HepG2 (cell line): ENCODE measurements at regions of chr13 and their contacts with region 1.

Region 1: GRCh38 chr13:29707876-29708543 is 112.5 kb upstream of the SLC7A1 start:
- DNase-seq: peak; percentile 44
- ATAC-seq: peak; percentile 98
- H3K4me3 ChIP-seq: no peak overlapping the region
- H3K27ac ChIP-seq: no peak overlapping the region
- H3K4me1 ChIP-seq: no peaks in the 10 kb centered on the region
- H3K27me3 ChIP-seq: peaks cover 1 to 9% of the 10 kb centered on the region in 2 experiments; a peak in 2 of 5 replicates
- CTCF ChIP-seq: peak; percentile 85
- EP300 ChIP-seq: no peak
- POLR2A ChIP-seq: no peak
- RAD21 ChIP-seq: peak; percentile 79

Region 2: DNA sequence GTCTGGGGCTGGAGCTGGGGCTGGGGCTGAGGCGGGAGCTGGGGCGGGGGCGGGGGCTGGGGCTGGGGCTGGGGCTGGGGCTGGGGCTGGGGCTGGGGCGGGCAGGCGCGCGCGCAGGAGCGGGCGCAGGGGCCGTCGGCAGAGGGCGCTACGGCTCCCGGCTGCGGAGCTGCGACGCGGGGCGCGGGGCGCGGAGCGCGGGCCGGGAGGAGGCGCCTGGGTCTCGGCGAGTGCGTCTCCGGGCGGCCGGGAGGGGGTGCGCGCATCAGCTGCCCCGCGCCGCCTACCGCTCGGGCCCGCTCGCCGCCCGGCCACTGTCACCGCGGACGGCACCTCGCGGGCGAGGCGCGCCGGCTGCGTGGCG is 888.3 kb before region 1 on chr13:
- CTCF ChIA-PET with region 1: no interaction called
- POLR2A ChIA-PET with region 1: no interaction called
- in situ Hi-C with region 1: loop called (anchors 25 kb)
- intact Hi-C with region 1: no loop called
- DNase-seq: peak; percentile 9
- ATAC-seq: peak; percentile 96
- H3K4me3 ChIP-seq: peak overlapping the region in 1 of 3 experiments; percentile 52; a peak in 1 of 6 replicates
- H3K27ac ChIP-seq: no peak overlapping the region
- H3K4me1 ChIP-seq: no peaks in the 10 kb centered on the region
- H3K27me3 ChIP-seq: peaks cover 0 to 9% of the 10 kb centered on the region in 2 experiments; a peak in 2 of 5 replicates
- CTCF ChIP-seq: peak; percentile 26; the same call in 1 of the 2 replicates
- EP300 ChIP-seq: no peak
- POLR2A ChIP-seq: no peak
- RAD21 ChIP-seq: peak; percentile 57; the same call in 1 of the 2 replicates

Region 3: DNA sequence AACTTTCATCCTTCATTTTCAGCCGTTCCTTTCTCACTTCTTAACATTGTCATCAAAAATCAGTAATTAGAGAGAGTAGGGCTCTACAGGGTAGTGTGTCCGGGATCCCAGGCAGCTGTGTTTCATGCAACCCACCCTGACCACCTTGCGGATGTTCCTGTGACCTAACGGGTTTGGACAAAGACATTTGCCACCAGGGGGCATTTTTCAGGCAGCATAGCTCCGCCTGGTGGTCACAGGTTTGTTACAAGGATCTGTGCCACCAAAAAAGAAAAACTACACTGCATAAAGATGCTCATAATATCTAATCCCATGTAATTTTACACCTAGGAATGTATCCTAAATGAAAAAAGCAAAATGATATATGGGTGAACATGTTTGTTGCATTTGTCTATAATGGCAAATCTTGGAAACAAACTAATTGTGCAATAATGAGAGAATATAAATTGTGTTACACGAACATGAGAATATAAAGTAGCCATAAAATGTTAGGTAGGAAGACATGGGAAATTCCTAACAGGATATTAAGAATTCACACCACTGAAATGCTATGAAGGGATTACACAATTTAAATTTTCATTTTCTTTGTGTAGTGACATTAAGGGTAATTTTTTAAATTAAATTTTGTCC is 235.6 kb before region 1 on chr13:
- CTCF ChIA-PET with region 1: interaction called, 50 read pairs
- POLR2A ChIA-PET with region 1: no interaction called
- in situ Hi-C with region 1: no loop called
- intact Hi-C with region 1: loop called (anchors 1 kb)
- DNase-seq: peak; percentile 59
- ATAC-seq: peak; percentile 92
- H3K4me3 ChIP-seq: no peak overlapping the region
- H3K27ac ChIP-seq: no peak overlapping the region
- H3K4me1 ChIP-seq: no peaks in the 10 kb centered on the region
- H3K27me3 ChIP-seq: peaks cover 0 to 6% of the 10 kb centered on the region in 2 experiments; a peak in 2 of 5 replicates
- CTCF ChIP-seq: peak; percentile 85
- EP300 ChIP-seq: no peak
- POLR2A ChIP-seq: no peak
- RAD21 ChIP-seq: peak; percentile 67

Region 4: GRCh38 chr13:29508130-29508875 is 199.7 kb before region 1 on chr13:
- CTCF ChIA-PET with region 1: interaction called, 26 read pairs
- POLR2A ChIA-PET with region 1: no interaction called
- in situ Hi-C with region 1: loop called (anchors 5 kb)
- intact Hi-C with region 1: loop called (anchors 1 kb)
- DNase-seq: peak; percentile 60
- ATAC-seq: peak; percentile 88
- H3K4me3 ChIP-seq: no peak overlapping the region
- H3K27ac ChIP-seq: no peak overlapping the region
- H3K4me1 ChIP-seq: peaks cover 12% of the 10 kb centered on the region
- H3K27me3 ChIP-seq: peaks cover 0 to 10% of the 10 kb centered on the region in 2 experiments; a peak in 1 of 5 replicates
- CTCF ChIP-seq: peak; percentile 94
- EP300 ChIP-seq: no peak
- POLR2A ChIP-seq: no peak
- RAD21 ChIP-seq: peak; percentile 75